H1 (cell line): ENCODE measurements at regions of chr2 and their contacts with region 1.

Region 1: GRCh38 chr2:208072250-208072892 is 47.0 kb upstream of the PLEKHM3 start:
- DNase-seq: peak; percentile 33 to 86
- H3K4me3 ChIP-seq: no peak overlapping the region
- H3K27ac ChIP-seq: no peak overlapping the region
- H3K4me1 ChIP-seq: peaks cover 0 to 2% (median 0%) of the 10 kb centered on the region in 4 experiments; a peak in 3 of 7 replicates
- H3K27me3 ChIP-seq: no peaks in the 10 kb centered on the region
- CTCF ChIP-seq: peak; percentile 36 to 88 (median 83)
- EP300 ChIP-seq: no peak
- POLR2A ChIP-seq: no peak
- RAD21 ChIP-seq: peak; percentile 93 to 94

Region 2: DNA sequence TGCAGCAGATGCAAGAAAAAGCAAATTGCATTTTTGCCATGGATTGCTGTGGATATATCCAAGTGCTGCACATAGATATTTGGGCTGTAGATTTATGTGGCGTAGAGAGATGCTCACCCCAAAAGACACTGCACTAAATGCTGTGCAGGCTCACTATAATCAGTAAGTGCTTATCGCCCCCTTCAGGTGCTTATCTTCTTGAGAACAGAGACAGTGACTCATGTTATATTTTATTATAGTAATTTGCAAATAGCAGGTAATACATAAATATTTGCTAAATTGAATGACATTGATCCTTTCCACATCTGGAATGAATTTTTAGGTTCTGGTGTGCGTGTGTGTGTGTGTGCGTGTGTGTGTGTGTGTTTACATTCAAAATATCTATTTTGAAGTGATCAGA is 10.3 kb before region 1 on chr2:
- CTCF ChIA-PET with region 1: interaction called, 11 read pairs
- POLR2A ChIA-PET with region 1: no interaction called
- DNase-seq: no peak
- H3K4me3 ChIP-seq: no peak overlapping the region
- H3K27ac ChIP-seq: no peak overlapping the region
- H3K4me1 ChIP-seq: no peaks in the 10 kb centered on the region
- H3K27me3 ChIP-seq: no peaks in the 10 kb centered on the region
- CTCF ChIP-seq: peak in 2 of 3 experiments; percentile 48 to 60; a peak in 2 of 4 replicates
- EP300 ChIP-seq: no peak
- POLR2A ChIP-seq: no peak
- RAD21 ChIP-seq: peak; percentile 76 to 78

Region 3: DNA sequence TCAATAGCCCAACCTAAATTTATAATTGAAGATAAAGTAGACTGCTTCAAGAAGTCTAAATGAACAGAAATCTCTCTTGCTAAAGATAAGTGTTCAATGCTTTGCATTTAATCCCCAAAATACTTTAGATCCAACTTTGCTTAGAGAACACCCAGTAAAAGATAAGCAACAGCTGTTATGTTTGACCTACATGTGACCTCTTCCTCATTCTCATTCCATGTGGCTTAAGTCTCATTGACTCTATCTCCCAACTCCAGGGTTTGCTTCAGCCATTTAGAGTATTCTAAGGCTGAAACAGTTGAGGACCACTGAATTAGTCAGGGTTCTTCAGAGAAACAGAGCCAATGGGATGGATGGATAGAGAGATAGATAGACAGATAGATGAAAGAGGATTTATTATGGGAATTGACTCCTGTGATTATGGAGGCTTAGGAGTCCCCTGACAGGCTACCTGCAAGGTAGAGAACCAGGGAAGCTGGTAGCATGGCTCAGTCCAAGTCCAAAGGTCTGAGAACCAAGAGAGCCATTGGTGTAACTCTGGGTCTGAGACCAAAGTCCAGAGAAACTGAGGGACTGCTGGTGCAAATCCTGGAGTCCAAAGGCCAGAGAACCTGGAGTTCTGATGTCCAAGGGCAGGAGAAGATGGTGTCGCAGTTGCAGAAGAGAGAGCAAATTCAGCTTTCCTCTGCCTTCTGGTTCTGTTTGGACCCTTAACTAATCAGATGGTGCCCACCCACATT is 19.9 kb after region 1 on chr2:
- CTCF ChIA-PET with region 1: interaction called, 13 read pairs
- POLR2A ChIA-PET with region 1: no interaction called
- DNase-seq: peak in 1 of 2 experiments; percentile 31
- H3K4me3 ChIP-seq: no peak overlapping the region
- H3K27ac ChIP-seq: no peak overlapping the region
- H3K4me1 ChIP-seq: no peaks in the 10 kb centered on the region
- H3K27me3 ChIP-seq: no peaks in the 10 kb centered on the region
- CTCF ChIP-seq: no peak
- EP300 ChIP-seq: no peak
- POLR2A ChIP-seq: no peak
- RAD21 ChIP-seq: no peak

Region 4: DNA sequence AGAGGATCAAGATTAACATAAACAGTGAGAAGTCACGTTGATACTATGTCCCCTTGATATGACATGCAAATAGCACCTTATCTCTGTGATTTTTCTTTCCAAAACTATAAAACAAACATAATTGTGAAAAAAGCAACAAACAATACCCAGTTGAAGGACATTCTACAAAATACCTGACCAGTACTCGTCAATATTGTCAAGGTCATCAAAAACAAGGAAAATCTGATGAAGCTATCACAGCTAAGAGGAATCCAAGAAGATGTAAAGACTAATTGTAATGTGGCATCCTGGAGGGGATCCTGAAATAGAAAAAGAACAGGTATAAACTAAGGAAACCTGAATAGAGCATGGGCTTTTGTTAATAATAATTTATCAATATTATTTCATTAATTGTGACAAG is 1029.9 kb after region 1 on chr2:
- CTCF ChIA-PET with region 1: no interaction called
- POLR2A ChIA-PET with region 1: no interaction called
- DNase-seq: no peak
- H3K4me3 ChIP-seq: no peak overlapping the region
- H3K27ac ChIP-seq: no peak overlapping the region
- H3K4me1 ChIP-seq: no peaks in the 10 kb centered on the region
- H3K27me3 ChIP-seq: no peaks in the 10 kb centered on the region
- CTCF ChIP-seq: no peak
- EP300 ChIP-seq: no peak
- POLR2A ChIP-seq: no peak
- RAD21 ChIP-seq: no peak